PC-9 (cell line): ENCODE measurements at regions of chr4 and their contacts with region 1.

Region 1: GRCh38 chr4:169270810-169271691 is at the start of gene SH3RF1:
- DNase-seq: peak; percentile 60 to 91
- H3K4me3 ChIP-seq: peak within 1 kb of the TSS; percentile 91
- H3K27ac ChIP-seq: peak within 1 kb of the TSS; percentile 66
- H3K4me1 ChIP-seq: peaks cover 39% of the 10 kb centered on the region
- H3K27me3 ChIP-seq: no peaks in the 10 kb centered on the region
- CTCF ChIP-seq: no peak; the same call in 1 of the 2 replicates
- total RNA-seq, gene SH3RF1: 26.4 and 37.4 TPM in 2 replicates

Region 2: DNA sequence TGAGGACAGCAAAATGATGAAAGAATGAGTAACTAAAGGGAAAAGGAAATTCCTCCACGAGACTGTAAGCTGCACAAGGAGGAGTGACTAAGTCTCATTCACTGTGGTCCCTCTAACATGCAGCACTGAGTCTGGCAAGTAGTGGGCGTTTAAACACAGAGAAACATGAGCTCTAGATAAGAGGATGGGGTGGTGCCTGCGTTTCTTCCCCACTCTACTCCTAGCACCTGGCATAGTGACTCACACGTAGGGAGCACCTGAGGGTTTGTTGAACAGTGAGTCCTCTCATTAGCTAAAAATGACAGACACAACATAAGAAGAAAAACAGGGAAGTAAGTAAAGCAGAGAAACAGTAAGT is 155.2 kb before region 1 on chr4:
- CTCF ChIA-PET with region 1: interaction called, 3 read pairs
- POLR2A ChIA-PET with region 1: no interaction called
- intact Hi-C with region 1: loop called (anchors 5 kb)
- DNase-seq: peak; percentile 78 to 93
- H3K4me3 ChIP-seq: no peak overlapping the region
- H3K27ac ChIP-seq: peak overlapping the region; percentile 98
- H3K4me1 ChIP-seq: peaks cover 25% of the 10 kb centered on the region
- H3K27me3 ChIP-seq: no peaks in the 10 kb centered on the region
- CTCF ChIP-seq: peak; percentile 49; the same call in 1 of the 2 replicates

Region 3: GRCh38 chr4:169225058-169225751 is 45.8 kb before region 1 on chr4:
- CTCF ChIA-PET with region 1: no interaction called
- POLR2A ChIA-PET with region 1: interaction called, 3 read pairs
- intact Hi-C with region 1: loop called (anchors 2 kb)
- DNase-seq: peak; percentile 18 to 86
- H3K4me3 ChIP-seq: no peak overlapping the region
- H3K27ac ChIP-seq: peak overlapping the region; percentile 88
- H3K4me1 ChIP-seq: peaks cover 37% of the 10 kb centered on the region
- H3K27me3 ChIP-seq: no peaks in the 10 kb centered on the region
- CTCF ChIP-seq: no peak

Region 4: DNA sequence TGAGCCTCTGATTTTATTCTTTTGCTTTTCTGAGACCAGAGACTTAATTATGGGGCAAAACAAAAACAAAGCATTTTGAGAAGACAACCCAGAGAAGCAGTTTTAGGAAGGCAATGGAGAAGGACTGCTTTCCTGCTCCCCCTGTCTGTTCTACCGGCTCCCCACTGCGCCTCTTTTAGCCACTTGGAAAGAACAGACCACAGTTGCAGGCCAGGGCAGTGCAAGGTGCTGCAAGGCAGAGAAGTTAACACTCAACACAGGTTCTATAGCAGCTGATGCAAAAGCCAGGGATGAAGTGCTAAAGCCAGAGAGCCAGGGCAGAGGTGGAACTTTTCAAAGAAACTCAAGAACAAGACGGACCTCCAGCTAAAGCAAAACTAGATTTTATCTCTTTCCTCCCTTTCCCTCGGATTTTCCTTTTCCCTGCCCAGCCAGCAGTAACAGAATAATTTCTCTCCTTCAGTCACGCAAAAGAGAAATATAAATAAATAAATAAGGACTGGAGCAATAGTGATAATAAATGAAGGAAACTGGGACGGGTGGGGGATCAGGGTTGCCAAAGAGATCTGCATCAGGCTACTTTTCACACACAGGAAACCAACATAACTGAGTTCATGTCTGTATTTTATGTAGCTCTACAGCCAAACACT is 10.7 kb before region 1 on chr4:
- CTCF ChIA-PET with region 1: no interaction called
- POLR2A ChIA-PET with region 1: no interaction called
- intact Hi-C with region 1: no loop called
- DNase-seq: no peak
- H3K4me3 ChIP-seq: no peak overlapping the region
- H3K27ac ChIP-seq: no peak overlapping the region
- H3K4me1 ChIP-seq: no peaks in the 10 kb centered on the region
- H3K27me3 ChIP-seq: no peaks in the 10 kb centered on the region
- CTCF ChIP-seq: no peak

Region 5: GRCh38 chr4:169283114-169283509 is 12.1 kb after region 1 on chr4:
- CTCF ChIA-PET with region 1: no interaction called
- POLR2A ChIA-PET with region 1: interaction called, 3 read pairs
- intact Hi-C with region 1: loop called (anchors 1 kb)
- DNase-seq: peak; percentile 31 to 84
- H3K4me3 ChIP-seq: peak overlapping the region; percentile 46; the same call in 1 of the 2 replicates
- H3K27ac ChIP-seq: peak overlapping the region; percentile 83
- H3K4me1 ChIP-seq: peaks cover 26% of the 10 kb centered on the region
- H3K27me3 ChIP-seq: no peaks in the 10 kb centered on the region
- CTCF ChIP-seq: no peak

Region 6: DNA sequence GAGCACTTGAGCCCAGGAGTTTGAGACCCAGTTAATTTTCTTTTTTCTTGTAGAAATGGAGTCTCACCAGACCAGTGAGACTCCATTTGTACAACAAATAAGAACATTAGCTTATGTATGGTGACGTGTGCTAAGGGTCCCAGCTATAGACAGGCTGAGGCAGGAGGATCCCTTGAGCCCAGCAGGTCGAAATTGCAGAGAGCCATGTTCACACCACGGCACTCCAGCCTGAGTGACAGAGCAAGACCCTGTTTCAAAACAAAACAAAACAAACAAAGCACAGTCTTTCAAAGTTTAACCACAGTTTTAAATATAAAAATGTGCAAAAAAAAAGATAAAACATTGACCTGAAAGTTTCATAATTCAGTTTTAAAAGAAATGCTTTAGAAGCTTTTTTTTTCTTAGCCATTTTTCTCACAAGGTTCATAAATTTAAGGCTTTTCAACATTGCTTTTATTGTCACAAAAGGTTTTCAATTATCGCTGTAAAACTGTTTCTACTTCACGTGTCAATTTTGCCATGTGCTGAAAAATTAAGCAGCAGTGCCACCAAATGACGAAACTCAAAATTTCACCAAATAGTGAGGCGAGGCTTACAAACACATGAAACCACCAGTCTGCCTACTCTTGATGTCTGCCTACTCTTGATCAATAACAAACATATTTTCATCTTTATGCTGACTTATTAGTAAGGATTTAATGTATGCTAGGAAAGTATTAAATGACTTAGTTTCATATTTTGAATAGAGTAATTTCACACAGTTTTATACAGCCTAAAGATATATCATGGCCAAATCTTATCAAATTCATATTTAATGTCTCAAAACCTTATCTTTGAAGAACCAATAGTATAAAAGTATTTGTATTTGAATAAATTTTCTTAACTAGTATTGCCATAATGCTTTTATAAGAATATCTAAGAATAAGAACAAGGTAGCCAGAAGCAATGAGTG is 215.0 kb after region 1 on chr4:
- CTCF ChIA-PET with region 1: no interaction called
- POLR2A ChIA-PET with region 1: interaction called, 4 read pairs
- intact Hi-C with region 1: loop called (anchors 1 kb)
- DNase-seq: peak; percentile 43 to 48
- H3K4me3 ChIP-seq: no peak overlapping the region
- H3K27ac ChIP-seq: no peak overlapping the region
- H3K4me1 ChIP-seq: peaks cover 4% of the 10 kb centered on the region; the same call in 1 of the 2 replicates
- H3K27me3 ChIP-seq: no peaks in the 10 kb centered on the region
- CTCF ChIP-seq: peak; percentile 68